Ascending aorta (tissue), 2 donors: ENCODE measurements at regions of chr7 and their contacts with region 1.

Region 1: GRCh38 chr7:38222481-38223096 is 44.5 kb downstream of the STARD3NL start:
- DNase-seq: no peak
- H3K4me3 ChIP-seq: no peak overlapping the region
- H3K27ac ChIP-seq: peak overlapping the region; percentile 29 to 56
- H3K4me1 ChIP-seq: no peaks in the 10 kb centered on the region
- H3K27me3 ChIP-seq: no peaks in the 10 kb centered on the region
- CTCF ChIP-seq: peak; percentile 65 to 92 (median 76)

Region 2: DNA sequence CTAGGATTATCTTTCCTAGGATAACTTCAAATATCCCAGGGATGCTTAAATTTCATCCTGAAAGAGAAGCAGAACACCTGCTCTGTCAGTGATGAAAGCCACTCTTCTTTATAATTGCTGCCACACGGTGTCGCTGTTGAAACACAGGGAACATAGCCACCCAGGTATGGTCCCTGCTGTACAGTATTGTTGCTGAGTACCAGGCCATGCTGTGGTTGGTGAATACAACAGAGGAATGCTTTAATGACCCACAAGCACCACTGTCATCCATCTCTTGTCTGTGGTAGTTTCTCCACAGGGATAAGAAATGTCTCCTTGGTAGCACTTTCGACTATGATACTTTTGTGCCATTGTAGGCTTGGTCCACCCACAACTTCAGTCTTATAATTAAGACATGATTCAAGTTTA is 115.1 kb before region 1 on chr7:
- intact Hi-C with region 1: loop called (anchors 1 kb)
- DNase-seq: peak in 1 of 2 donors; percentile 78
- H3K4me3 ChIP-seq: no peak overlapping the region
- H3K27ac ChIP-seq: no peak overlapping the region
- H3K4me1 ChIP-seq: no peaks in the 10 kb centered on the region
- H3K27me3 ChIP-seq: no peaks in the 10 kb centered on the region
- CTCF ChIP-seq: peak; percentile 33 to 81 (median 67)